ENCODE measurements at regions of chr19 and their contacts with region 1.

Region 1: DNA sequence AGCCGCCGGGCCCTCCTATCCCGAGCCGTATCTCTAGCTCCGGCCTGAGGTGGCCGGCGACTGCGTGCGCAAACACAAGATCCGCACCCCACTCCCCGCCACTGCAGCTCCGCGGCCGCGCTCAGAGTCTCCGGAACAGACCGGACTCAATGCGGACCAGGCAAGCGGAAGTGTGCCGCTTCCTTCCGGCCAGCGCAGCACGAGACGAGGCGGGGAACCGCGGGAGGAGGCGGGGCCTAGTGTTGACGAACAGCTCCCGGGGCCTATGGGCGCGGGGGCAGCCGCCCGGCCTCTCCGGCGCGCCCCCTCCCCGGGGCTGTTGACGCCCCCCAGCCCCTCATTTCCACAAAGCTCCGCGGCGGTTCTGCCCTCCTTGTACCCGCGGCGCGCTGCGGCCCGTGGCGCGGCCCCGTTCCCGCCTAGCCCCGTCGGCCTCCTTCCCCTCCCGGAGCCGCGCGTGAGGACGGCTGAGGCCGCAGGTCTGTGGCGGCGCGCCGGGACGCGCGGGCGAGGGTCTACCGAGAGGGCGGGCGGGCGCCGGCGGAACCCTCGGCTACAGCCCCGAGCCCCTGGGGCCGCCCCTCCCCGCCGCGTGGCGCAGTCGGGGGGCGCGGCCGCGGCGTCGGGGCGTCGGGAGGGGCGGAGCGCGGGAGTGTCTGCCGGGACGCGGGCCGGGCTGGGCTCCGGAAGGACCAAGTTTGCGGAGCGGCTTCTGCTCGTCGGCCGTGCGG is at the start of gene DPY19L3:
- DNase-seq: peak; percentile 95 to 97 (median 96)
- ATAC-seq: peak; percentile 99 to 100 (median 99)
- H3K4me3 ChIP-seq: peak within 1 kb of the TSS; percentile 73 to 97 (median 86)
- H3K27ac ChIP-seq: peak within 1 kb of the TSS; percentile 90 to 99 (median 98)
- H3K4me1 ChIP-seq: peaks cover 0 to 26% (median 14%) of the 10 kb centered on the region in 12 donors
- H3K27me3 ChIP-seq: no peaks in the 10 kb centered on the region
- CTCF ChIP-seq: peak in 1 of 12 donors; percentile 20
- POLR2A ChIP-seq: peak in 1 of 2 donors; percentile 93
- total RNA-seq, gene DPY19L3: 3.6 to 15.2 (median 8.7) TPM

Region 2: GRCh38 chr19:32339988-32340874 is 65.4 kb before region 1 on chr19:
- intact Hi-C with region 1: loop called in 8 of 10 experiments (anchors 2 to 10 kb)
- DNase-seq: peak; percentile 59 to 80 (median 77)
- ATAC-seq: peak; percentile 72 to 90 (median 88)
- H3K4me3 ChIP-seq: no peak overlapping the region
- H3K27ac ChIP-seq: peak overlapping the region in 2 of 12 donors; percentile 9 to 29
- H3K4me1 ChIP-seq: peaks cover 0 to 12% (median 0%) of the 10 kb centered on the region in 12 donors
- H3K27me3 ChIP-seq: peaks cover 0 to 83% (median 0%) of the 10 kb centered on the region in 9 donors
- CTCF ChIP-seq: peak; percentile 46 to 79 (median 64)
- POLR2A ChIP-seq: no peak

Region 3: GRCh38 chr19:32345261-32346207 is 60.1 kb before region 1 on chr19 and contains the start of gene ZNF507:
- intact Hi-C with region 1: loop called in 8 of 10 experiments (anchors 2 to 10 kb)
- DNase-seq: peak; percentile 83 to 89 (median 86)
- ATAC-seq: peak; percentile 77 to 98 (median 96)
- H3K4me3 ChIP-seq: peak within 1 kb of the TSS; percentile 73 to 93 (median 82)
- H3K27ac ChIP-seq: peak within 1 kb of the TSS; percentile 43 to 89 (median 75)
- H3K4me1 ChIP-seq: peaks cover 0 to 41% (median 29%) of the 10 kb centered on the region in 12 donors
- H3K27me3 ChIP-seq: peaks cover 0 to 73% (median 0%) of the 10 kb centered on the region in 9 donors
- CTCF ChIP-seq: peak in 3 of 12 donors; percentile 4 to 24 (median 19)
- POLR2A ChIP-seq: no peak
- total RNA-seq, gene ZNF507: 9.1 to 27.3 (median 17.3) TPM

Region 4: GRCh38 chr19:32837531-32837930 is 431.9 kb after region 1 on chr19:
- intact Hi-C with region 1: no loop called
- DNase-seq: no peak
- ATAC-seq: no peak
- H3K4me3 ChIP-seq: no peak overlapping the region
- H3K27ac ChIP-seq: no peak overlapping the region
- H3K4me1 ChIP-seq: no peaks in the 10 kb centered on the region
- H3K27me3 ChIP-seq: no peaks in the 10 kb centered on the region
- CTCF ChIP-seq: no peak
- POLR2A ChIP-seq: no peak

Measured in heart left ventricle (tissue), 16 donors.